ENCODE measurements at regions of chr10 and their contacts with region 1.

Region 1: GRCh38 chr10:127911218-127911866 is 4.4 kb downstream of the PTPRE start:
- DNase-seq: no peak
- H3K4me3 ChIP-seq: no peak overlapping the region
- CTCF ChIP-seq: no peak

Region 2: DNA sequence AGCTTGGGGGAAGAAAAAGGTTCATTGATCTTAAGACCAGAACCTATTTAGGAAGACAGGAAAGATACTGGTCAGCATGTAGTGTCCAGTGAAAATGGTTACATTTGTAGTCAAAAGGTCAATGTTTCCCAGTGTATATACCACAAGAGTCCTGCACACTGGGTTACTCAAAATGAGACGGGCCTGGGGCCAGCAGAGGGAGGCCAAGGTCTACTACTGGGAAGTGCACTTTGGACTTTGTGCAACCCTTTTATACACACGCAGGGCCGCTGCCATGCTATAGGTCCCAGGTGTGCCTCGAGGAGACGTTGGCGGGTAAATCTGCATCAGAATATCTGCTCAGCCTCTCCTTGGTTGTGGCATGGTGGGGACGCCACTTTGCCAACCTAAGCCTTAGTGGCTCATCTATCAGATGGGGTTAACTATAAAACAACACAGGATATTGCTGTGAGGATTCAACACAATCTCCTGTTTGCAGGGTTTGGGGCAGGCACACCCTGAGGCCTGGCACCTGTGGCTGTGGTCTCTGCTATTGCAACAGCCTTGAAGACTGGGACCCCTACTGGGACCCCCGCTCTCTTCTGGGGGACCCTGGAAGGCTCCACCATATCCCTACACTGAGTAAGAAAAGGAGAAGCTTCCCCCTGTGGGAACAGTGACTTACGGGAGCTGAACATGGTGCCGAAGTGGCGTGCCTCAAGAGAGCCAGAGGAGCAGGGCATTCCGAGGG is 38.3 kb before region 1 on chr10:
- in situ Hi-C with region 1: no loop called
- DNase-seq: no peak
- H3K4me3 ChIP-seq: no peak overlapping the region
- CTCF ChIP-seq: no peak

Region 3: DNA sequence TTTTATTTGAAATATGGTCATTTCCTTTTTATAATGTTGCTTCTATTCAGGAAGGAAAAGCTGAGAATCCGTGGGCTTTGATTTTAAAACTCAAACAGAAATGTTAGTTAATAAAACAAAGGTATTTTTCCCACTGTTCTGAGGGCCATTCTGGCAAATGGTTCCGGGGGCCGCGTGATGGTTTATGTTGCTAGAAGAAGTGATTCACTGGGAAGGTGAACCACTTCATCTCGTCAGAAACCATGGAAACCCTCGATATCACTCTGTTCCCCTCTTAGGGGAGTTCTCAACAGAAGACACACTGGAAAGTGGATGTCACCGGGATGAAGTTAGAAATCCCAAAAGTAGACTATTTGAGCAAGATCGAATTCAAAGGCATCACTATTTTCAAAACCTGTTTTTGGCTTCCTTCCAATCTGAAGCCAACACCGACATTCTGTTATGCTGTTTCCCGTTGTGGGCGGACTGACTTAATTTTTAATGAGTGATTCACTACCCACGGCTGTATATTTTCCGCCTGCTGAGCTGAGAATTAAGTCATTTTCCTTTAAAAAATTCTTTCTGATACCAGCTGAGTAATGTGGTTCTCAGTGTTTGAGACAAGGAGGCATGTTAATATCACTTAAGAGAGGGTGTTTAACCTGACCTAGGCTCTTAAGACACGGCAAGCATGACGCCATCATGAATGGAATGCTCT is 79.7 kb after region 1 on chr10:
- in situ Hi-C with region 1: no loop called
- DNase-seq: peak; percentile 88
- H3K4me3 ChIP-seq: no peak overlapping the region
- CTCF ChIP-seq: no peak

Region 4: GRCh38 chr10:128011175-128011979 is 100.0 kb after region 1 on chr10:
- in situ Hi-C with region 1: loop called (anchors 5 kb)
- DNase-seq: peak; percentile 18
- H3K4me3 ChIP-seq: no peak overlapping the region
- CTCF ChIP-seq: peak; percentile 99